A549 (cell line): ENCODE measurements at regions of chr9 and their contacts with region 1.

Region 1: DNA sequence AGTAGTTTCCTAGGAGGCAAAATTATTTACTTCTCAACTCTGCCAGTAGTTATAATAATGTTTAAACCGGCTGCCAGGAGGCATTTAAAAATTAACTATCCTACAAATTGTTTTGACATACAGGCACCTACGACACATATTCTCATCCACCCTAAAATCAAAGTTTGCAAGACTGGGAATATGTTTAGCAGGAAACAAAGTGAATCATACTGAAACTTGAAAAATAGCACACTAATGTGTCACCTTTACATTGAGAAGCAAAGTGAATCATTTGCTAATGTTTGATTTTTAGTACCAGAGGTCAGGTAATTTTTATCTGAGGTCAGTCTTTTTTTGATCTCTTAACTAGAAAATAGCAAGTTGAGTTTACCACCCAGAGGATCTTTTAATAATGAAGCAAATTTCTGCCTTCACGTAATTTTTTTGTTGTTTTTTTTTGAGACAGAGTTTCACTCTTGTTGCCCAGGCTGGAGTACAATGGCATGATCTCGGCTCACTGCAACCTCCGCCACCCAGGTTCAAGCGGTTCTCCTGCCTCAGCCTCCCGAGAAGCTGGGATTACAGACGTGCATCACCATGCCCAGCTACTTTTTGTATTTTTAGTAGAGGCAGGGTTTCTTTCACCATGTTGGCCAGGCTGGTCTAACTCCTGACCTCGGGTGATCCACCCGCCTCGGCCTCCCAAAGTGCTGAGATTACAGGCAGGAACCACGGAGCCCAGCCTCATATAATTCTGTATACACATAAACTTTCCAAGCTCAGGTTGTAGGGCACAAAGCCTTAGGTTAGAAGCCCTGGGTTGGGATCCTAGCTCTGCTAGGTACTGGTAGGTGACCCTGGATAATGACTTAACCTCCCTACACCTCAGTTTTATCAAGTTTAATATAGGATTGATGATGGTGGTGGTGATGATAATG is 124.3 kb downstream of the UGCG start:
- DNase-seq: peak; percentile 77 to 86
- ATAC-seq: peak; percentile 89 to 96
- H3K4me3 ChIP-seq: no peak overlapping the region
- H3K27ac ChIP-seq: peak overlapping the region; percentile 71 to 89
- H3K4me1 ChIP-seq: peaks cover 24% of the 10 kb centered on the region
- CTCF ChIP-seq: no peak
- EP300 ChIP-seq: peak; percentile 77 to 82; a peak in 4 of 5 replicates
- POLR2A ChIP-seq: no peak
- RAD21 ChIP-seq: peak; percentile 29 to 59; a peak in 4 of 5 replicates

Region 2: DNA sequence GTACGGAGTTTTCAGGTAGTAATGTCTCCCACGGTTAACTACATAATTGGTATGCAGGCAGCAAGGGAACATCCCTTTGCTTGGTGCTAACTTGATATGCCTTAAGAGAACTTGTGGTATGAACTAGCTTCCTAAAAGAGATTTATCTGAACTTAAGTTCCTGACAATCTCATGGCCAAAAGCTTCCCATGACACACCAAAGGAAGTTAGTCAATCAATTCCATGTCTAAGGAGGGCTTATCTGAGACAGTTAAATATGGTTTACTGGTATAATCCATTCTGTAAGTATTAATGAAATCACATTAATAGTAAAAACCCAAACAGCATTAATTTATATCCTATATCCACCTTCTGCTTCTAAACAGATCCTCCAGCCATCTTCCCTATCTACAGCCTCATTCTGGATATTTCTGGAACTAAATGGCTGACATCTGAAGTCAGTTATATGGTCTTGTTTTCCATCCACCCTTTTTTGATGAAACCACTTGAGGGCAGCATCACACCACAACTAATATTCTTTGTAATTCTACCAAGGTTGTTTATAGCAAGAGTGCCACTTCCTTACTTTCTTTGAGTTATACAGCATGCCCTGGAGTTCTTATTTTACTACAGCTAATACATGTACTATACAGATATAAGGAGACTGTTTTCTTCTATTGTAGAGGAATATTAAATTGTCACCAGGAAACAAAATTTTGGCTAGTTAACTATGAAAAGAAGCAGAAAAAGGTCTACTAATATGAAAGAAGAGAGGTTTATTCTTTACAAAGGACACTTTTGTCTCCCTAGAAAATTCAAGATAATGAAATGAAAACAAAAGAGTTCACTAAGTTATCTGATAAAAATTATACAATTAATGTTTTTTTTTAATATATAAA is 260.9 kb before region 1 on chr9:
- CTCF ChIA-PET with region 1: interaction called, 11 read pairs
- POLR2A ChIA-PET with region 1: no interaction called
- DNase-seq: peak; percentile 41 to 84
- ATAC-seq: peak; percentile 93
- H3K4me3 ChIP-seq: no peak overlapping the region
- H3K27ac ChIP-seq: peak overlapping the region; percentile 5 to 22; a peak in 5 of 6 replicates
- H3K4me1 ChIP-seq: no peaks in the 10 kb centered on the region; the same call in 2 of the 3 replicates
- CTCF ChIP-seq: peak; percentile 88
- EP300 ChIP-seq: no peak
- POLR2A ChIP-seq: no peak
- RAD21 ChIP-seq: peak; percentile 97 to 98

Region 3: GRCh38 chr9:111896353-111896958 is 124.5 kb before region 1 on chr9 and contains the start of gene UGCG:
- CTCF ChIA-PET with region 1: interaction called, 17 read pairs
- POLR2A ChIA-PET with region 1: interaction called, 11 read pairs
- DNase-seq: peak; percentile 79 to 90
- ATAC-seq: peak; percentile 90 to 93
- H3K4me3 ChIP-seq: peak within 1 kb of the TSS; percentile 92
- H3K27ac ChIP-seq: peak within 1 kb of the TSS; percentile 87 to 97
- H3K4me1 ChIP-seq: peaks cover 46% of the 10 kb centered on the region
- CTCF ChIP-seq: no peak
- EP300 ChIP-seq: no peak
- POLR2A ChIP-seq: peak; percentile 97
- RAD21 ChIP-seq: 0 out of 5 replicates have a peak, but pooled peaks of 1 of the 2 experiments have one; percentile 12
- polyA plus RNA-seq, gene UGCG: 16.7 and 25.9 TPM in 2 replicates

Region 4: GRCh38 chr9:111902396-111903147 is 118.4 kb before region 1 on chr9:
- CTCF ChIA-PET with region 1: interaction called, 17 read pairs
- POLR2A ChIA-PET with region 1: interaction called, 11 read pairs
- DNase-seq: no peak
- ATAC-seq: no peak
- H3K4me3 ChIP-seq: no peak overlapping the region
- H3K27ac ChIP-seq: no peak overlapping the region
- H3K4me1 ChIP-seq: peaks cover 47% of the 10 kb centered on the region
- CTCF ChIP-seq: no peak
- EP300 ChIP-seq: no peak
- POLR2A ChIP-seq: no peak
- RAD21 ChIP-seq: no peak

Region 5: GRCh38 chr9:111937301-111937700 is 83.6 kb before region 1 on chr9:
- CTCF ChIA-PET with region 1: interaction called, 10 read pairs
- POLR2A ChIA-PET with region 1: no interaction called
- DNase-seq: no peak
- ATAC-seq: no peak; a peak in 1 of 6 replicates
- H3K4me3 ChIP-seq: no peak overlapping the region
- H3K27ac ChIP-seq: no peak overlapping the region
- H3K4me1 ChIP-seq: no peaks in the 10 kb centered on the region
- CTCF ChIP-seq: no peak
- EP300 ChIP-seq: no peak
- POLR2A ChIP-seq: no peak
- RAD21 ChIP-seq: no peak

Region 6: GRCh38 chr9:111965566-111966019 is 55.3 kb before region 1 on chr9:
- CTCF ChIA-PET with region 1: interaction called, 16 read pairs
- POLR2A ChIA-PET with region 1: no interaction called
- DNase-seq: peak; percentile 96 to 97
- ATAC-seq: peak; percentile 94 to 97
- H3K4me3 ChIP-seq: no peak overlapping the region
- H3K27ac ChIP-seq: peak overlapping the region; percentile 77 to 89
- H3K4me1 ChIP-seq: peaks cover 53% of the 10 kb centered on the region
- CTCF ChIP-seq: no peak
- EP300 ChIP-seq: peak; percentile 49 to 78; a peak in 3 of 5 replicates
- POLR2A ChIP-seq: no peak
- RAD21 ChIP-seq: peak; percentile 36 to 52; a peak in 2 of 5 replicates

Region 7: DNA sequence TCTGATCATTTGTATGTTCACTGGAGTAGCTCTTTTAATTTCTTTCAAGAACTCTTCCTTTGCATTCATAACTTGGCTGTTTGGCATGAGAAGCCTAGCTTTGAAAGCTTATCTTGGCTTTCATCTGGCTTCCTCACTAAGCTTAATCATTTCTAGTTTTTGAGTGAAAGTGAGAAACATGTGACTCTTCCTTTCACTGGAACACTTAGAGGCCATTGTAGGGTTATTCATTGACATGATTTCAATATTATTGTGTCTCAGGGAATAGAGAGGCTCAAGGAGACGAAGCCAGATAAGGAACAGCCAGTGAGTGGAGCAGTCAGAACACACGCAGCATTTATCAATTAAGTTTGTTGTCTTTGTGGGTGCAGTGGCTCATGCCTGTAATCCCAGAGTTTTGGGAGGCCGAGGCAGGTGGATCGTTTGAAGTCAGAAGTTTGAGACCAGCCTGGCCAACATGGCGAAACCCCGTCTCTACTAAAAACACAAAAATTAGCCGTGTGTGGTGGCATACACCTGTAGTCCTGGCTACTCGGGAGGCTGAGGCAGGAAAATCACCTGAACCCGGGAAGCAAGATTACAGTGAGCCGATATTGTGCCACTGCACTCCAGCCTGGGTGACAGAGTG is 26.0 kb before region 1 on chr9:
- CTCF ChIA-PET with region 1: no interaction called
- POLR2A ChIA-PET with region 1: no interaction called
- DNase-seq: no peak
- ATAC-seq: no peak
- H3K4me3 ChIP-seq: no peak overlapping the region
- H3K27ac ChIP-seq: peak overlapping the region in 1 of 2 experiments; percentile 36; a peak in 1 of 6 replicates
- H3K4me1 ChIP-seq: peaks cover 10% of the 10 kb centered on the region; the same call in 2 of the 3 replicates
- CTCF ChIP-seq: no peak
- EP300 ChIP-seq: no peak
- POLR2A ChIP-seq: no peak
- RAD21 ChIP-seq: no peak